Ovary (tissue), 10 donors: ENCODE measurements at regions of chr5 and their contacts with region 1.

Region 1: DNA sequence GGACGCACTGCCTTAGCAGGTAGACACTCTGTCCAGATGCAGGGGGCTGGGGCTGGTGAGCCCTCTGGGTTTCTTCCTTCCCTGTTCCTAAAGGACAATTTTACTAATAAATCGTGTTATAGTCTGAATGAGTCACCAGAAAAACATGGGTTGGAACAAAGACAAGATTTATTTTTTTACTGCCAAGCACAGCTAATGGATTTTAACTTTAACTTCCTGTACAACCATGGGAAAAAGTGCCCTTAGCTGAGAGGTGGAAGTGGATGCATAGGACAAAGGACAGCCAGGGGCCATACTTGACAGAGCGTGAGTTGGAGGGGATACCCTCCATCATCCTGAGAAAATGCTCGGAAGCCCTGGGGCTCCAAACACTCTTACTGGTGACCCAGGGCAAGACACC is 300.7 kb downstream of the MSX2 start:
- DNase-seq: no peak
- H3K4me3 ChIP-seq: no peak overlapping the region
- H3K27ac ChIP-seq: no peak overlapping the region
- H3K4me1 ChIP-seq: no peaks in the 10 kb centered on the region
- H3K27me3 ChIP-seq: no peaks in the 10 kb centered on the region
- CTCF ChIP-seq: no peak
- EP300 ChIP-seq: no peak
- POLR2A ChIP-seq: no peak

Region 2: DNA sequence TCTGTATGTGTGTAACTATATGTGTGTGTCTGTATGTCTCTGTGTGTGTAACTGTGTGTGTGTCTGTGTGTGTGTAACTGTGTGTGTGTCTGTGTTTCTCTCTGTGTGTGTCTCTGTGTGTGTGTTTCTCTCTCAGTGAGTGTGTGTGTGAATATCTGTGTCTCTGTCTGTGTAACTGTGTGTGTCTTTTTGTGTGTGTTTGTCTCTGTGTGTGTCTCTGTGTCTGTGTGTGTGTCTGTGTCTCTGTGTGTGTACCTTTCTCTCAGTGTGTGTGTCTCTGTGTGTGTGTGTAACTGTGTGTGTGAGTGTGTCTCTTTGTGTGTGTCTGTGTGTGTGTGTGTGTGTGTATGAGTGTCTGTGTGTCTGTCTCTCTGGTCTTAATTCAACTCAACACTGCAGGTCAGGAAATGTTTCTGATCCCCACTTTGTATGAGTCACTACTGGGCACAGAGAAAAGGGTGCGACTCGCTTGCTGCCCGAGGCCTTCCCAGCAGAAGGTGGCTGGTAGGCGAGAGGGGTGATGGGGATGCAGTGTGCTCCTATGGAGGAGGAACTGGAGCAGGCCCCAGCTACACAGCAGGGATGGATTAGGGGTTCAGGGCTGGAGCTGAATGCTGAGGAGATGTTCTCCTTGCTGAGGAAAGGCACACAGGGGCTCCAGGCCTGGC is 927.4 kb before region 1 on chr5:
- intact Hi-C with region 1: loop called in 1 of 4 experiments (anchors 10 kb)
- DNase-seq: no peak
- H3K4me3 ChIP-seq: no peak overlapping the region
- H3K27ac ChIP-seq: no peak overlapping the region
- H3K4me1 ChIP-seq: no peaks in the 10 kb centered on the region
- H3K27me3 ChIP-seq: no peaks in the 10 kb centered on the region
- CTCF ChIP-seq: no peak
- EP300 ChIP-seq: no peak
- POLR2A ChIP-seq: no peak